CD4-positive, alpha-beta memory T cell (primary cell): ENCODE measurements at regions of chr2 and their contacts with region 1.

Region 1: DNA sequence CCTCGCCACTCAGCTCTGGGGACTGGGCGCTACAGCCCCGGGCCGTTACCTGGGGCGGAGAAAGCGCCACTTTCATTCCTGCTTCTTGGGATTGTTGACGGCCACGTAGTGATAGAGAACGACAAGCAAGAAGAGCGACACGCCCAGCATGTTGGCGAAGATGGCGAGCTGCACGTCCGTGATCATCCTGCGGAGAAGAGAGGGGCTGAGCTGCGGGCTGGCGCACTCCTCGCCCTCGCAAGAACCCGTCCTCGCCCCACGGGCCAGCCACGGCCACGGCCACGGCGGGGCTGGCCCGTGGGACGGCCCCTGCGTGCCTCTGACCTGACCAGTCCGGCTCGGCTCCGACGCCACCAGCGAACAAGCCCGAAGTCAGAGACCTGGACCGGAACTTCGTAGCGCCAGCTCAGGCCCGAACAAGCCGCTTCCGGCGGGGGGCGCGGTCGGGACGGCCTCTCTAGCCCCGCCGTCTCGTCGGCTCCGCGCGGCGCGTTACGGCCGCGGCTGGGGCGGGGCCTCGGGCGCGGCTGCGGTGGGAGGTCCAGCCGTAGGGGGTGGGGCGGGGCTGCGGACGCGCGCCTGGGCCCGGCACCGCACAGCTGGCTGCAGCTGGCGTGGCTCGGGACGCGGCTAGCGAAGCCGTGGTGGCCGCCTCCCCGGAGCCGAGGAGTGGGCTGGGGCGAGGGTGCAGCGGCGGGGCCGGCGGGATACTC is at the start of gene OST4:
- DNase-seq: peak; percentile 87 to 91 (median 89)
- H3K4me3 ChIP-seq: peak within 1 kb of the TSS; percentile 95 to 97
- H3K4me3 Mint-ChIP-seq: peak within 1 kb of the TSS; percentile 92 to 98 (median 97)
- H3K27ac ChIP-seq: peak within 1 kb of the TSS; percentile 95
- H3K27ac Mint-ChIP-seq: peak within 1 kb of the TSS; percentile 93 to 99 (median 98)
- H3K4me1 ChIP-seq: peaks cover 62% of the 10 kb centered on the region
- H3K4me1 Mint-ChIP-seq: peaks cover 44 to 86% (median 70%) of the 10 kb centered on the region in 4 donors
- H3K27me3 ChIP-seq: no peaks in the 10 kb centered on the region
- H3K27me3 Mint-ChIP-seq: no peaks in the 10 kb centered on the region
- total RNA-seq, gene OST4: 269 to 296 TPM

Region 2: DNA sequence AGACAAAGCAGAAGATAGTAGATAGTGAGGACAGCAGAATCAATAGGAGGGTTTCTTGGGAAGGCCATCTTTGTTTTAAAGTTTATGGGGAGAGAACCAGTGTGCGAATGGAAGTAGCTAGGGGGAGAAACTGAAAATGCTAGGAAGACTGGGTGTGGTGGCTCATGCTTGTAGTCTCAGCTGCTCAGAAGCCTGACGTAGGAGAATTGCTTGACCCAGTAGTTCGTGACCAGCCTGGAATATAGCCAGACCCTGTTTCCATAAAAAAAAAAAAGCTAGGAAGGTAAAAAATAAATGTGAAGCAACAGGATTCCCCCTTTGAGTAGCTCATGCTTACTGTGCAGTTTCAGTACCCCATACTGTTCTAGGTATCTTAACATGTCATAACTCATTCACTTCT is 688.9 kb before region 1 on chr2:
- CTCF ChIA-PET with region 1: no interaction called
- POLR2A ChIA-PET with region 1: no interaction called
- intact Hi-C with region 1: no loop called
- DNase-seq: no peak
- H3K4me3 ChIP-seq: no peak overlapping the region
- H3K4me3 Mint-ChIP-seq: no peak overlapping the region
- H3K27ac ChIP-seq: no peak overlapping the region
- H3K27ac Mint-ChIP-seq: peak overlapping the region in 1 of 7 donors; percentile 75
- H3K4me1 ChIP-seq: no peaks in the 10 kb centered on the region
- H3K4me1 Mint-ChIP-seq: peaks cover 0 to 10% (median 1%) of the 10 kb centered on the region in 4 donors
- H3K27me3 ChIP-seq: no peaks in the 10 kb centered on the region
- H3K27me3 Mint-ChIP-seq: no peaks in the 10 kb centered on the region

Region 3: GRCh38 chr2:27211829-27212627 is 140.6 kb after region 1 on chr2 and contains the starts of genes ATRAID and SLC5A6:
- CTCF ChIA-PET with region 1: no interaction called
- POLR2A ChIA-PET with region 1: interaction called, 14 read pairs
- intact Hi-C with region 1: no loop called
- DNase-seq: peak; percentile 89 to 93 (median 92)
- H3K4me3 ChIP-seq: peak within 1 kb of the TSS; percentile 71 to 94
- H3K4me3 Mint-ChIP-seq: peak within 1 kb of the TSS; percentile 95 to 100 (median 100)
- H3K27ac ChIP-seq: peak within 1 kb of the TSS; percentile 99
- H3K27ac Mint-ChIP-seq: peak within 1 kb of the TSS; percentile 97 to 100 (median 100)
- H3K4me1 ChIP-seq: peaks cover 22% of the 10 kb centered on the region
- H3K4me1 Mint-ChIP-seq: peaks cover 23 to 37% (median 31%) of the 10 kb centered on the region in 4 donors
- H3K27me3 ChIP-seq: no peaks in the 10 kb centered on the region
- H3K27me3 Mint-ChIP-seq: no peaks in the 10 kb centered on the region
- total RNA-seq, gene ATRAID: 103 to 109 TPM
- total RNA-seq, gene SLC5A6: 21.9 to 25.1 TPM

Region 4: GRCh38 chr2:28206762-28207161 is 1135.3 kb after region 1 on chr2:
- CTCF ChIA-PET with region 1: no interaction called
- POLR2A ChIA-PET with region 1: no interaction called
- intact Hi-C with region 1: no loop called
- DNase-seq: no peak
- H3K4me3 ChIP-seq: no peak overlapping the region
- H3K4me3 Mint-ChIP-seq: no peak overlapping the region
- H3K27ac ChIP-seq: no peak overlapping the region
- H3K27ac Mint-ChIP-seq: no peak overlapping the region
- H3K4me1 ChIP-seq: no peaks in the 10 kb centered on the region
- H3K4me1 Mint-ChIP-seq: peaks cover 0 to 2% (median 0%) of the 10 kb centered on the region in 4 donors
- H3K27me3 ChIP-seq: no peaks in the 10 kb centered on the region
- H3K27me3 Mint-ChIP-seq: no peaks in the 10 kb centered on the region